ENCODE measurements at regions of chr10 and their contacts with region 1.

Region 1: DNA sequence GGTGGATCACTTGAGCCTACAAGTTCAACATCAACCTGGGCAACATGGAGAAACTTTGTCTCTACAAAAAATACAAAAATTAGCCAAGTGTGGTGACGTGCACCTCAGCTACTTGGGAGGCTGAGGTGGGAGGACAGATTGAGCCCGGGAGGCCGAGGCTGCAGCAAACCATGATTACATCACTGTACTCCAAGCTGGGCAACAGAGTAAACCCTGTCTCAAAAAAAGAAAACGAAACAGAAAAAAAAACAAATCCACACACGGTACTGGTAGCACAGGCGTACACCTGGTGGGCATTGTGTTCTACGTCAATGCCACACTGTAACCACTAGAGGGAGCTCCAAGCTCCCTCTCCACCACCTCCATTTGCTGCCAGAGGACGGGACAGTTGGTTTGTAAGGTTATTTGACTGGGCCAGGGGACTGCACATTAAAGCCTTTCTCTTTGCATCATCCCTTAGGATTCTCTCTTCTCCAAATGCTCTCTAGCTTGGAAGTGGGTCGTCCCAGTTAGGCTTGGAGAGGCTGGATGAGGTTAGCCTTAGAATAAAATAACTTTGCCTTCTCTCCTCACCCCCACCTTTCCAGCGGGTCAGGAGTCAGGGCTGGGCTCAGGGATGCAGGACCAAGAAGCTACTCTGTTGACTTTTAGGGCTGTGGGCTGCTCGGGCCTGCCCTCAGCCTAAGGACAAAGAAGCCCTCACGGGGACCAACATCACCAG is 130.8 kb downstream of the SORBS1 start:
- DNase-seq: peak in 1 of 2 experiments; percentile 61
- H3K4me3 ChIP-seq: no peak overlapping the region
- H3K27ac ChIP-seq: no peak overlapping the region
- H3K4me1 ChIP-seq: peaks cover 0 to 2% (median 0%) of the 10 kb centered on the region in 4 experiments; a peak in 2 of 7 replicates
- H3K27me3 ChIP-seq: no peaks in the 10 kb centered on the region
- CTCF ChIP-seq: peak; percentile 91 to 98 (median 96)
- EP300 ChIP-seq: no peak
- POLR2A ChIP-seq: no peak
- RAD21 ChIP-seq: peak; percentile 98 to 99

Region 2: DNA sequence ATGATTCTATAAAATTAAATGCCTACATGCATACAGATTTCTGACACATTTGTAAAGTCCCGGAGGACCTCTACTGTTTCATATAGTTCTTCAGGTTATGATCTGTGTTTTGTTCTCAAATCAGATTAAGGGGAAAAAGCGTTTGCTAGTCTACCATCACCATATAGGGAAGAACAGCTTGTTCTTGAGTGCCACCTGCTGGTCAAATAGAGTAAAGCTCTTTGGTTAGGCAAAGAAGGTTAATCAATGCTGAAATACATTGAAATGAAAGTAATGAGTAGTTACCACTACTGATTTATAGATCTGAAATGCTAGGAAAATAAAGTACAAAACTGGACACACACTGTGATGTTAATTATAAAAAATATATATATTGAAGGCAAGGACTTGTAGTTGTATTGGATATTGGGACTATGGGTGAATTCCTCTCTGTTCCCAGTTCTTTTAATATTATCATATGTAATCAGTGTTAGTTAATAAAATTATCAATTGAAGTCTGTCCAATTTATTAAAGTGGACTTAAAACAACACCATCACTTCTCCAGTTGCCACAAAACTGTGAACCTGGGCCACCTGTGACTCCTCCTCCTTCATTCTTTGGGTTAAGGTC is 67.0 kb before region 1 on chr10:
- CTCF ChIA-PET with region 1: interaction called, 17 read pairs
- POLR2A ChIA-PET with region 1: no interaction called
- DNase-seq: no peak
- H3K4me3 ChIP-seq: no peak overlapping the region
- H3K27ac ChIP-seq: no peak overlapping the region
- H3K4me1 ChIP-seq: peaks cover 0 to 3% (median 0%) of the 10 kb centered on the region in 4 experiments; a peak in 2 of 7 replicates
- H3K27me3 ChIP-seq: no peaks in the 10 kb centered on the region
- CTCF ChIP-seq: peak in 2 of 3 experiments; percentile 73 to 82; a peak in 3 of 4 replicates
- EP300 ChIP-seq: no peak
- POLR2A ChIP-seq: no peak
- RAD21 ChIP-seq: peak; percentile 95 to 96

Region 3: GRCh38 chr10:95445837-95446486 is 15.6 kb after region 1 on chr10:
- CTCF ChIA-PET with region 1: interaction called, 284 read pairs
- POLR2A ChIA-PET with region 1: interaction called, 4 read pairs
- DNase-seq: peak; percentile 53 to 70
- H3K4me3 ChIP-seq: no peak overlapping the region
- H3K27ac ChIP-seq: no peak overlapping the region
- H3K4me1 ChIP-seq: peaks cover 0 to 11% (median 1%) of the 10 kb centered on the region in 4 experiments; a peak in 4 of 7 replicates
- H3K27me3 ChIP-seq: no peaks in the 10 kb centered on the region
- CTCF ChIP-seq: peak; percentile 58 to 97 (median 75)
- EP300 ChIP-seq: no peak
- POLR2A ChIP-seq: no peak
- RAD21 ChIP-seq: peak; percentile 59 to 75

Region 4: DNA sequence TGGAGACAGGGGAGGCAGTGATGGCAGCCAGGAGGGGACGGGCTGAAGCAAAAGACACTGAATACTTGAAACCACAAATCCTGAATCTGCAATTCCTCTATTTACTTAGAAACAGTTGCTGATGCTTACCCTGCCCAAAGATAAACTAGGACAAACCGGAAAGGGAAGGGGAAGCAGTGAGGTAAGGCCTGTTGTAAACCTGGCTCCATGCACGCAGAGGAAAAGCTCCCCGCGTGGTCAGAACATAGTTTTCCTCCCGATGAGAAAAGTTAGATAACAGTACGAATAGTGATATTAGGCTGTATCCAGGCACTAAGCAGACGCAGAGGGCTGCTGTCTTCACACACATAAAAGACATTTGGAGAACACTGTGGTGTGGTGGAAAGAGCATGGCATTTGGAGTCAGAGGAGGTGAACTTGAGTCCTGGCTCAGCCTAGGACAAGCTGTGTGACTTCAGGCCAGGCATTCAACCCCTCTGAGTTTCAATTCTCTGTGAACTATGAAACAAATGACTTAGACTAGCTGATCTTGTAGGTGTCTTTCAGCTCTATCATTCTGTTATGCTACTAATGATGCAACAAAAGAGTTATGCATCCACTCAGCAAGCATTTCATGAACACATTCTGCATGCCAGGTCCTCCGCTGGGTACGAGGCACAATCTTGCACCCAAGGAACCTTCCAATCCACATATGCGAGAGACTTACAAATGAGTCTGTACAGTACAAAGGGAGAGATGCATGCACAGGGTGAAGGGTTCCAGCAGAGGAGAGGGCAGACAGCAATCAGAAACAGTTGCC is 49.9 kb after region 1 on chr10:
- CTCF ChIA-PET with region 1: interaction called, 17 read pairs
- POLR2A ChIA-PET with region 1: interaction called, 3 read pairs
- DNase-seq: no peak
- H3K4me3 ChIP-seq: no peak overlapping the region
- H3K27ac ChIP-seq: 0 out of 2 replicates have a peak overlapping the region, but pooled peaks have one; percentile 21
- H3K4me1 ChIP-seq: peaks cover 13 to 31% (median 20%) of the 10 kb centered on the region in 4 experiments
- H3K27me3 ChIP-seq: no peaks in the 10 kb centered on the region
- CTCF ChIP-seq: peak in 1 of 3 experiments; percentile 34; a peak in 1 of 4 replicates
- EP300 ChIP-seq: no peak
- POLR2A ChIP-seq: no peak
- RAD21 ChIP-seq: no peak; a peak in 1 of 4 replicates

Region 5: DNA sequence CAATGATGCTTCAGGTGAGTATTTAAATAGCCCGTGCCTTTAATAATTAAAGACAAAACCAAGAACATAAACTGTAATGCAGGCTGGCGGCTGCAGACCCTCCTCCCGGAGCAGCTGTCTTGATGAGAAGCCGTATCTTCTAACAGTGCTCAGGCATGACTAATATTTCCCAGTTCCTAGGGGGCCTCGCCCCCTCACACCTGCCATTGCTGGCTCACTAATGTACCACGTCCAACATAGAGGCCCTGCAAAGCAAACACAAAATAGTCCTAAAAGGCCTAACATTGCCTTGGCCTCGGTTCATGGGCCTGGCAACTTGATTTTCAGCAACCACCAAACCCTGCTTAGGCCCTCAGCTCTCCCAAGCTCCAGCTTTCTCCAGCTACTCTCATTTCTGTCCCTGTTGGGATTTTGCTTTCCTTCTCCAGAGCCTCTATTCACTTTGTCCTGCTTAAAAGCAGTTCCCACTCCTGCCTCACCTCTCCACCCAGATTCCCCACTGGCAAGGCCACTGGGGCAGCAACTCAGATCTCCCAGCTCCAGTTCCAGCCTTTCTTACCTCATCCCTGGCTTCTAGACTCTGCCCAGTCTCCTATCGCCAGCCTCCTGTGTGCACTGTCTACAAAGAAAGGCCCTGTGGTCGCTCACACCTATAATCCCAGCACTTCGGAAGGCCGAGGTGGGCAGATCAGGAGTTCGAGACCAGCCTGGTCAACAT is 114.6 kb after region 1 on chr10:
- CTCF ChIA-PET with region 1: interaction called, 10 read pairs
- POLR2A ChIA-PET with region 1: no interaction called
- DNase-seq: no peak
- H3K4me3 ChIP-seq: no peak overlapping the region
- H3K27ac ChIP-seq: no peak overlapping the region
- H3K4me1 ChIP-seq: peaks cover 7 to 33% (median 23%) of the 10 kb centered on the region in 4 experiments
- H3K27me3 ChIP-seq: peaks cover 0 to 9% (median 3%) of the 10 kb centered on the region in 4 experiments; a peak in 4 of 7 replicates
- CTCF ChIP-seq: no peak
- EP300 ChIP-seq: no peak
- POLR2A ChIP-seq: no peak
- RAD21 ChIP-seq: no peak

Region 6: DNA sequence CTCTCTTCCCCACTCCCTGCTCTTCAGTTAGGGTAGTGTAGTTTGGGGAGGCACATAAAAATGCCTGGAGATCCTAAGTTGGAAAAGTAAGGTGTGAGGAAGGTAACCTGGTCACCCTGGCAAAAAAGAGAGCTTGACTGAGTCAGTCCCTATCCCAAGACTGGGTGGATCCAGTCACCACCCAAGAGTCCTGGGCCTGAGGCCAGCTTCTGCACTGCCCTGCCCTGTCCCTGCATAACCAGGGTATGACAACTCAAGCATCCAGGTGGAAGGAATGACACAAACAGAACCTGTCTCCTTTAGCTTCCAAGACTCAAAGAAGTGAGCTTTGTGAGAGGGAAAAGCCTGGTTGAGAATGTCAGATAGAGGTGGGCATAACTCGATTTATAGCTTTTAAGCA is 157.6 kb after region 1 on chr10:
- CTCF ChIA-PET with region 1: interaction called, 45 read pairs
- POLR2A ChIA-PET with region 1: no interaction called
- DNase-seq: no peak
- H3K4me3 ChIP-seq: no peak overlapping the region
- H3K27ac ChIP-seq: no peak overlapping the region
- H3K4me1 ChIP-seq: no peaks in the 10 kb centered on the region
- H3K27me3 ChIP-seq: no peaks in the 10 kb centered on the region
- CTCF ChIP-seq: no peak
- EP300 ChIP-seq: no peak
- POLR2A ChIP-seq: no peak
- RAD21 ChIP-seq: no peak

Measured in H1 (cell line).